ENCODE measurements at regions of chr5 and their contacts with region 1.

Region 1: GRCh38 chr5:154683101-154683880 is 71.9 kb upstream of the LARP1 start:
- DNase-seq: peak; percentile 70
- H3K4me3 ChIP-seq: peak overlapping the region; percentile 67
- H3K27ac ChIP-seq: peak overlapping the region; percentile 78
- H3K4me1 ChIP-seq: peaks cover 21% of the 10 kb centered on the region
- CTCF ChIP-seq: no peak

Region 2: GRCh38 chr5:154320224-154321089 is 362.8 kb before region 1 on chr5:
- CTCF ChIA-PET with region 1: no interaction called
- POLR2A ChIA-PET with region 1: no interaction called
- intact Hi-C with region 1: no loop called
- DNase-seq: no peak
- H3K4me3 ChIP-seq: no peak overlapping the region
- H3K27ac ChIP-seq: no peak overlapping the region
- H3K4me1 ChIP-seq: no peaks in the 10 kb centered on the region
- CTCF ChIP-seq: no peak

Region 3: DNA sequence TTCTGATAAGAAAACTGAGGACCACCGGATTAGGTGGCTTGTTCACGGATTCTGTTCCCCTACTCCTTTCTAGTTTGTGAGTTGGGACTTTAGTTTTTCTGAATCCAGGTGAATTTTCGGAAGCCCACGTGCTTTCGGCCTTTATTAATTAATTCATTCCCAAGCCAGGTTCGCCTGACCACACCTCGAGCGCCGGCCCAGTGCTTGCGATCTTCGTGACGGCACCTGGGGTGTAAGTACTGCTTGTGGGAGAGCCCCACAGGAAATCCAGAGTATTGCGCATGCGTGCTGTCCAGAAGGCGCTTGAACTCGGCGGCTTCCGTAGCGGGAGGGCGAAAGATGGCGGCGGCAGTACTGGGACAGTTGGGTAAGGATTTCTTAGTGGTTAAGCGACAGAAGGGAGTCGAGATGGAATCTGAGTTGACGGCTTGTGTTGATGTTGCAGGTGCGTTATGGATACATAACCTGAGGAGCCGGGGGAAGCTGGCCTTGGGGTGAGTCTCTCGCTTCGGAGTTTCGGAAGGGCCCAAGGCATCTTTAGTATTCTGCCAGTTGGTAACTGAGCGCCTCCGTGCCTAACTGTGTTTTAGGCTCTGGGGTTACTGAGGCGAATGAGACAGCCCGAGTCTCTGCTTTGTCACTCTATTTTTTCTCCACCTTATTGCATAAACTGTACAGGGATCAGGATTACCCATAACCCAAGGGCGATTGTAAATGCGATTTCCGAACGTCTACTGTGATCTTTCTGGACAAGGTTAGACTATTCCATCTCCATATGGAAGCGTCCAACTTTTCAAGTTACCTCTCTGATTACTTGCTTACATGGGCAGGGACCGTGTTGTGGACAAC is 257.7 kb after region 1 on chr5 and contains the start of gene MRPL22:
- CTCF ChIA-PET with region 1: no interaction called
- POLR2A ChIA-PET with region 1: interaction called, 3 read pairs
- intact Hi-C with region 1: loop called (anchors 5 kb)
- DNase-seq: peak; percentile 94
- H3K4me3 ChIP-seq: peak within 1 kb of the TSS; percentile 95
- H3K27ac ChIP-seq: peak within 1 kb of the TSS; percentile 72
- H3K4me1 ChIP-seq: peaks cover 47% of the 10 kb centered on the region
- CTCF ChIP-seq: no peak
- total RNA-seq, gene MRPL22: 34.0 and 48.9 TPM in 2 replicates

Region 4: DNA sequence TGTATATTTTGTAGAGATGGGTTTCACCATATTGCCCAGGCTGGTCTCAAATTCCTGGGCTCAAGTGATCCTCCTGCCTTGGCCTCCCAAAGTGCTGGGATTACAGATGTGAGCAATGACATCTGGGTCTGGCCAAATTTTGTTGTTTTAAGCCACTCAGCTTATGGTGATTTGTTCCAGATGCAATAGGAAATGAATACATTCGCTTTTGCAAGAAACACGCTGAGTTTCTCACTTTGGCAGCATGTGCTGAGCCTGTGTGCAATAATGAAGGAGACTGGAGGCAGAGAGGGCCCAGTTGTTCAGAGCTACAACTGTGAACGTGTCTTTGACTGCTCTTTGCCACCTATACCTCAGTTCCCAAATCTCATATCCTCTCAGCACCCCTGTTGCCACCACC is 386.7 kb after region 1 on chr5:
- CTCF ChIA-PET with region 1: no interaction called
- POLR2A ChIA-PET with region 1: no interaction called
- intact Hi-C with region 1: no loop called
- DNase-seq: no peak
- H3K4me3 ChIP-seq: no peak overlapping the region
- H3K27ac ChIP-seq: no peak overlapping the region
- H3K4me1 ChIP-seq: no peaks in the 10 kb centered on the region
- CTCF ChIP-seq: no peak

Measured in OCI-LY7 (cell line).